Keratinocyte (primary cell): ENCODE measurements at regions of chr4 and their contacts with region 1.

Region 1: GRCh38 chr4:77358315-77358928 is 201.4 kb downstream of the CCNG2 start:
- DNase-seq: no peak
- H3K4me3 ChIP-seq: no peak overlapping the region
- H3K27ac ChIP-seq: no peak overlapping the region
- H3K4me1 ChIP-seq: peaks cover 10% of the 10 kb centered on the region
- H3K27me3 ChIP-seq: no peaks in the 10 kb centered on the region
- CTCF ChIP-seq: peak; percentile 62 to 68 (median 65)

Region 2: DNA sequence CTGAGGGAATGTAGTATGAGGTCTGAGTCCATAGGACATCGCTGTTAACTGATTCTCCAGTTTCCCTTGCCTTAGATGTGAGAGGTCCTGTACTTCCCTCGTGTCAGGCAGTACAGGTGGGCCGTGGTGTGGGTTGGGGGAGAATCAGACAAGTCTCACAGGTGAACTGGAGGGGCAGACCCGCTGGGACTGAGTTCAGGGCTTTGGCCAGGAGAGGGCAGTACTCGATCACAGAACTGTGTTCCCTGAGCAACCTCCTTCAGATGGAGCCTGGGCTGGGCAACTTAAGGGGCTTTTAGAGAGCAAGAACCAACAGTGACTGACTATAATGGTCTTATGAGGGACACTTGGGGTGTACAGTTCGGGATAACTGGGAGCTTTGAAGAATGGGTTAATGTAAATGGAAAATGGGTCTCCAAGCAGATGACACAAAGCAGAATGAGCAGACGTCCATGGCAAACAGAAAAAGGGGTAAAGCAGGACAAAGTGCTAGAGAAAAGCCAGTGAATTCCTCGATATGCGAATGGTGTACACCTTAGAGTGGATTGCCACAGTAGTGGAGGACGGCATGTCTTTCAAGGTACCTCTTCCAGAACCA is 117.9 kb before region 1 on chr4:
- dilution Hi-C with region 1: loop called (anchors 25 kb)
- DNase-seq: peak; percentile 38
- H3K4me3 ChIP-seq: no peak overlapping the region
- H3K27ac ChIP-seq: no peak overlapping the region
- H3K4me1 ChIP-seq: no peaks in the 10 kb centered on the region
- H3K27me3 ChIP-seq: peaks cover 8% of the 10 kb centered on the region
- CTCF ChIP-seq: peak; percentile 88 to 97 (median 90)

Region 3: DNA sequence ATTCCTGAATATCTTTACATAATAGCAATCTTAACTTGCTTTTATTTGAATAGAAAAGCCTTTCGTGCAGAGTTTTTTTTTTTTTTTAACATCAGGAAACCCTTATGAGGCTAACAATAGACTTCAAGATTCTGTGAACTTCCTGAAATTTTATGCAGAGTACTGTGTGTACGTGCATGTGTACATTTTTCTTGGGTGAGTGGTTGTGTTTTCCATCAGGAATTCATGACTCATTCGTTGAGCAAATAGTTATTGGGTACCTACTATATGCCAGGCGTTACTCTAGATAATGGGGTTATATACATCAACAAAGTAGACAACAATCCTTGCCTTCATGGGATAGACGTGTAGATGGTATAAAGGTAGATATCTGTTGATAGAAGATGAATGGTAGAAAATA is 563.3 kb after region 1 on chr4:
- dilution Hi-C with region 1: no loop called
- DNase-seq: peak; percentile 56
- H3K4me3 ChIP-seq: no peak overlapping the region
- H3K27ac ChIP-seq: peak overlapping the region; percentile 76
- H3K4me1 ChIP-seq: peaks cover 26% of the 10 kb centered on the region
- H3K27me3 ChIP-seq: no peaks in the 10 kb centered on the region
- CTCF ChIP-seq: no peak